ENCODE measurements at regions of chr4 and their contacts with region 1.

Region 1: DNA sequence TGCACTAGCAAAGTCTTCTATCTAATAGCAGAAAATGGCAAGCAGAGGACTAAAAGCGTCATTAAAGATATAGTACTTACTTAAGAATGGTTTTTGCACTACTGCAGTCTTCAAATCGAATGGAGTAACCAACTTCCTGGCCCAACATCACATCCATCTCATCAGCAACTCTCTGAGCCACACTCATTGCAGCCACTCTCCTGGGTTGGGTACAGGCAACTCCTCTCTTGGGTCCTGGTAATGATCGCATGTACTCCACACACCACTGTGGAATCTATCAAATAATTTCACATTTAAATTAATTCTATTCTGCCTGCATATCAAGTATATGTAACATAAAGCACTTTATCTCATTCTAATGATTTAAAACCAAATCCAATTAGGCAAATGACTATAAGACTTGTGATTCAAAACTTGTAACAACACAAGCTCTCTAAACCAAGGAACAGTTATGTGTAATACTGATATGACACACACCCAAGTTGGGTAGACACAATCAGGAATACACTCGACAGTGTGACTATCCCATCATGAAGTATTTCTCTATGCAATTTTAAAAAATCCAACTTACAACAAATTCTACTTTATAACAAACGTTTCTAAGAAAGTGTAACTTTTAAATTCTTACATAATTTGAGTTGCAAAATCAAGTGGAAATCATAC is 13.6 kb downstream of the DHX15 start:
- DNase-seq: no peak
- H3K4me3 Mint-ChIP-seq: no peak overlapping the region
- H3K27ac Mint-ChIP-seq: peak overlapping the region; percentile 25
- H3K4me1 Mint-ChIP-seq: peaks cover 65% of the 10 kb centered on the region
- H3K27me3 Mint-ChIP-seq: no peaks in the 10 kb centered on the region

Region 2: GRCh38 chr4:24557026-24558025 is 13.4 kb before region 1 on chr4:
- intact Hi-C with region 1: loop called (anchors 2 kb)
- DNase-seq: no peak
- H3K4me3 Mint-ChIP-seq: peak overlapping the region; percentile 33
- H3K27ac Mint-ChIP-seq: peak overlapping the region; percentile 49
- H3K4me1 Mint-ChIP-seq: peaks cover 57% of the 10 kb centered on the region
- H3K27me3 Mint-ChIP-seq: no peaks in the 10 kb centered on the region

Measured in activated T-helper 1 cell treated with anti-CD3 and anti-CD28 coated beads, Interleukin-12 subunit alpha, Interleukin-12 subunit beta, Interleukin-2, Interleukin-4 antibody, amounts not matched to agents 30 ng/mL and 10 ng/mL and 1 ng/mL, durations not matched to agents 14 hours and 24 hours and 36 hours (primary cell).